Pancreas (tissue), 10 donors: ENCODE measurements at regions of chr1 and their contacts with region 1.

Region 1: GRCh38 chr1:55140546-55140983 is 74.6 kb downstream of the USP24 start:
- DNase-seq: peak in 4 of 6 donors; percentile 24 to 80 (median 65)
- ATAC-seq: peak; percentile 91 to 100 (median 98)
- H3K4me3 ChIP-seq: no peak overlapping the region
- H3K27ac ChIP-seq: no peak overlapping the region
- H3K4me1 ChIP-seq: peaks cover 0 to 3% (median 0%) of the 10 kb centered on the region in 3 donors
- H3K27me3 ChIP-seq: no peaks in the 10 kb centered on the region
- CTCF ChIP-seq: peak; percentile 33 to 64 (median 63)

Region 2: DNA sequence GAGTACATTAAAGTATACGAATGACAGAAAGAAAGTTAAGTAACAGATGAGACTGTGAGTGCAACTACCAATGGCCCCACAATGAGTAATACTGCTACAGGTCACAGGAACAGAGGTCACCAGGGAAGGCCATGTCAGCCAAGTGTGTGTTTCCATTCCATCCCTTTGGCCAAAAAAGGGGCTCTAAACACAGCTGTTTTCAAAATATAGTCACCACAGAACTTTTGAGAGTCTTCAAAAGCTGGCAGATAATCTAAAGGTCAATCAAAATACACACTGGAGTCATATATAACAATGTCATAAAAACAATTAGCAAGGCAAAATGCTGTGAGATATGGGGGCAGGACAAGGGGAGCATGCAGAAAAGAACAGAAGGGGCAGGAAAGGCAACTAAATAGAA is 64.4 kb after region 1 on chr1:
- intact Hi-C with region 1: no loop called
- DNase-seq: no peak
- ATAC-seq: peak in 2 of 4 donors; percentile 41 to 42
- H3K4me3 ChIP-seq: no peak overlapping the region
- H3K27ac ChIP-seq: no peak overlapping the region
- H3K4me1 ChIP-seq: peaks cover 5 to 21% (median 9%) of the 10 kb centered on the region in 3 donors
- H3K27me3 ChIP-seq: no peaks in the 10 kb centered on the region
- CTCF ChIP-seq: no peak

Region 3: GRCh38 chr1:55277377-55278130 is 137.0 kb after region 1 on chr1:
- intact Hi-C with region 1: loop called in 2 of 3 experiments (anchors 5 kb)
- DNase-seq: peak; percentile 59 to 90 (median 81)
- ATAC-seq: peak; percentile 94 to 97 (median 96)
- H3K4me3 ChIP-seq: no peak overlapping the region
- H3K27ac ChIP-seq: no peak overlapping the region
- H3K4me1 ChIP-seq: no peaks in the 10 kb centered on the region
- H3K27me3 ChIP-seq: no peaks in the 10 kb centered on the region
- CTCF ChIP-seq: peak; percentile 73 to 80 (median 74)

Region 4: DNA sequence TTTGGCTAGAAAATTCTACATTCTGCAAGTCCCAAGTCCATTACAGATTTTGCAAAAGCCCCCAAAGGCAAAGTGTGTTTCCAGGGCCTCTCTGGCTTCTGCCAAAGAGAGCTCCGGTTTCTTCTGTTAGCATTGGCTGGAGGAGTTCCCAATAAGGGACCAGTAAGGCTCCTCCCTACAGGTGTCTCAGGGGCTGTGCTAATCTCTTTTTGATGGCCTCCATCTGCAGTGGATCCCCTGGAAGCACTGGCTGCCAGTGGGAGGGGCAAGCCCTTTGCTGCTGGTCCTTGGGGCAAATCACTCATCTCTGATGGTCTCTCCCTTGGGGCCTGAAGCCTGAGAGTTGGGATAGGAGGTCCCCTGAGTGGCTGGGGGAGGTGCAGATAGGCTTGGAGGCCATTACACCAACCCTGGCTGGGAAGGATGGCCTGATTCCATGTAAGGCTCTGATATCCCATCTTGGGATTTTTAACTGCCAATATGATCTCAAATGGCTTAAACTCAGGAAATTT is 163.7 kb after region 1 on chr1:
- intact Hi-C with region 1: no loop called
- DNase-seq: no peak
- ATAC-seq: no peak
- H3K4me3 ChIP-seq: no peak overlapping the region
- H3K27ac ChIP-seq: no peak overlapping the region
- H3K4me1 ChIP-seq: no peaks in the 10 kb centered on the region
- H3K27me3 ChIP-seq: no peaks in the 10 kb centered on the region
- CTCF ChIP-seq: no peak